K562 (cell line): ENCODE measurements at regions of chr1 and their contacts with region 1.

Region 1: DNA sequence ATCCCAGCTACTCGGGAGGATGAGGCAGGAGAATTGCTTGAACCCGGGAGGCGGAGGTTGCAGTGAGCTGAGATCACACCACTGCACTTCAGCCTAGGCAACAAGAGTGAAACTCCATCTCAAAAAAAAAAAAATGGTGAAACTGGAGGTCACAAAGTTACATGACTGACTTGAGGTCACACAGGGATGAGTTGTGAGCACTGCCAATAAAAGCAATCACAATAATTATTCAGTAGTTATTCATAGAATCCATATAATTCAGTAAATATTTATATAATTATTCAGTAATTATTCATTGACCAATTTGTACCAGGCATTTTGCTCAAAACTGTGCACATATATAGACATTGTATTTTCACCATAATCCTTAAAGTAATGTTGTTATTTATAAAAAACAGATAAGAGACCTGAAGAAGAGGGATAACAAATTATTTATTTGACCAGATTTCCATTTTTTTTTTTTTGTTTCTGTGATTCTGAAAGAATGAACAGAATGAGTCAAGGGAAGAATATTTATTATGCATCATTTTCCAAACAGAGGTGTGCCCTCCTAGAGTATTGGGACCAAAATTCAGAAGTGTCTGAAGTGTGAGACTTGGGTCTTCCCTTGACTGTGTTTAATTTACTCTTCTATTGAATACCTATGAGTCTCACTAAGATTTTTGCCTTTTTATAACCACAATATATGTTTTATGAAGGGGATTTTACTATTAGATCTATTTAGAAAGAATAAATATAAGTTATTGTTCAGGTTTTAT is 43.0 kb downstream of the PRKAB2 start:
- DNase-seq: no peak
- ATAC-seq: no peak
- H3K4me3 ChIP-seq: no peak overlapping the region
- H3K27ac ChIP-seq: no peak overlapping the region
- H3K4me1 ChIP-seq: no peaks in the 10 kb centered on the region; a peak in 1 of 5 replicates
- H3K27me3 ChIP-seq: peaks cover 5 to 7% of the 10 kb centered on the region in 2 experiments; a peak in 4 of 5 replicates
- CTCF ChIP-seq: no peak
- EP300 ChIP-seq: no peak
- POLR2A ChIP-seq: no peak
- RAD21 ChIP-seq: no peak

Region 2: GRCh38 chr1:147109041-147109440 is 20.3 kb before region 1 on chr1:
- CTCF ChIA-PET with region 1: no interaction called
- POLR2A ChIA-PET with region 1: no interaction called
- in situ Hi-C with region 1: no loop called
- intact Hi-C with region 1: loop called (anchors 2 kb)
- DNase-seq: no peak
- ATAC-seq: no peak
- H3K4me3 ChIP-seq: no peak overlapping the region
- H3K27ac ChIP-seq: no peak overlapping the region
- H3K4me1 ChIP-seq: peaks cover 0 to 6% of the 10 kb centered on the region in 2 experiments; a peak in 1 of 5 replicates
- H3K27me3 ChIP-seq: peaks cover 2 to 29% of the 10 kb centered on the region in 2 experiments; a peak in 4 of 5 replicates
- CTCF ChIP-seq: no peak
- EP300 ChIP-seq: no peak
- POLR2A ChIP-seq: no peak
- RAD21 ChIP-seq: no peak

Region 3: GRCh38 chr1:147152772-147153171 is 23.5 kb after region 1 on chr1:
- CTCF ChIA-PET with region 1: no interaction called
- POLR2A ChIA-PET with region 1: interaction called, 3 read pairs
- in situ Hi-C with region 1: no loop called
- intact Hi-C with region 1: loop called (anchors 2 kb)
- DNase-seq: no peak
- ATAC-seq: no peak
- H3K4me3 ChIP-seq: no peak overlapping the region
- H3K27ac ChIP-seq: no peak overlapping the region
- H3K4me1 ChIP-seq: peaks cover 0 to 7% of the 10 kb centered on the region in 2 experiments; a peak in 2 of 5 replicates
- H3K27me3 ChIP-seq: no peaks in the 10 kb centered on the region
- CTCF ChIP-seq: no peak
- EP300 ChIP-seq: no peak
- POLR2A ChIP-seq: no peak
- RAD21 ChIP-seq: no peak

Region 4: DNA sequence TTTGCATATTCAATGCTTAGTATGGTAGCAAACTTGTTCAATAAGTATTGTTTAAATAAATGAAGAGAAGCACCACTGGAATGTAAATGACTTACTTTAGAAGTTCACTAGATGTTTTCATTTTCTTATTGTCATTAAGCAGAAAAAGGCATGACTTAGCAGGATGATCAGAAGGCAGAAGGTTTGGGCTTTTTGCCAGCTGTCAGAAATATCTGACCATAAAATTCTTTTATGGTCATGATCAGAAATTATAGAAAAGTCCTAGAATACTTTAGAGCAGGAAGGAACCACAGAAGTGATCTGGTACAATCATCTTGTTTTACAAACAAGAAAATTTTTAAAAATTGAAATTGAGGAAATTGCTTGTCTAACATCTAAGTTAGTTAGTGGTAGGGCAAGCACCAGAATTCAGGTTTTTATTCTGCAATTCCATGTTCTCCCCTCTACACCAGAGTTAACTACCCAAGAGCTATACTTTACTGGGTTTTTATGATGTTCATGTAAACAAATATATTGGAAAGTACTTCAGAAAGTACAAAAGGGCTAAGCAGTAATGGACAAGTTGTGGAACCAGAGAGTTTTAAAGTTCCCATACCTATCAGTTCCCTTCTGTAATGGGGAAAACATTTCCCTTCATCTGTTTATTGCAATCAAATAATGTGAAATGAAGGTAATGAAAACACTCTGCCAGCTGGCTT is 85.7 kb after region 1 on chr1:
- CTCF ChIA-PET with region 1: no interaction called
- POLR2A ChIA-PET with region 1: no interaction called
- in situ Hi-C with region 1: no loop called
- intact Hi-C with region 1: no loop called
- DNase-seq: no peak
- ATAC-seq: no peak
- H3K4me3 ChIP-seq: no peak overlapping the region
- H3K27ac ChIP-seq: no peak overlapping the region
- H3K4me1 ChIP-seq: 0 out of 5 replicates have a peak, but pooled peaks cover 0 to 3% of the 10 kb centered on the region in 2 experiments
- H3K27me3 ChIP-seq: peaks cover 5 to 16% of the 10 kb centered on the region in 2 experiments
- CTCF ChIP-seq: no peak
- EP300 ChIP-seq: no peak
- POLR2A ChIP-seq: no peak
- RAD21 ChIP-seq: no peak

Region 5: DNA sequence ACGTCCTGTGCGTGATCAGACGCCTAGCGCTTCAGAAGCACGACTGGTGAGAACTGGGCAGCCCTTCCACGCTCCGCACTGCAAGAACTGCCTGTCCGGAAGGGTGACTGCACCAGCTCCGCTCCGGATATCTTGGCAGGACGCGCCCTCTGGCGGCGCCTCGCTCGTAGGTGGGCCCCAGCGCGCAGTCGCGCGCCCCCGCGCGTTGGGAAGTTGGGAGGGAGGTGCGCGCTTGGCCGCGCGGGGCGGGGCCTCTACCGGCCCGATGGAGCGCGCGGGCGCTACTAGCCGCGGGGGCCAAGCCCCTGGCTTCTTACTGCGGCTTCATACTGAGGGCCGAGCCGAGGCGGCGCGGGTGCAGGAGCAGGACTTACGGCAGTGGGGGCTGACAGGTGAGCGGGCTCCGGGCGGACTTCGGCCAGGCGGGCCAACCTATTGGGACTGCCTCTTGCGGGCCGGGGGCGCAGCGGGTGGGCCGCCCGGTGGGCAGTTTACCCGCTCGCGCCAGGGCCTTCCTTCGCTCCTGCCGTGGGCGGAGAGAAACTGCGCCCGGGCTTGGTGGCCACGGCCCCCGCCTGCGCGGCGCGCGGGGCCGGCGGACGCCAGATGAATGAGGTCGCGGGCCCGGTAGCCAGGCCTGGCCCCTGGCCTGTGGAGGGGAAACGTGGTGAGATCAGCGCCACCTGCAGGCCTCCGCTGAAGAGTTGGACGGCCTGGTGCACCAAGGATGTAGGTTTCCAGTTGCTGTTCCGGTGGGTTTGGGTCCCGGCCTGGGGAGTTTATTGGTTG is 113.3 kb after region 1 on chr1 and contains the start of gene CHD1L:
- CTCF ChIA-PET with region 1: no interaction called
- POLR2A ChIA-PET with region 1: no interaction called
- in situ Hi-C with region 1: no loop called
- intact Hi-C with region 1: no loop called
- DNase-seq: peak; percentile 91 to 97 (median 92)
- ATAC-seq: peak; percentile 89
- H3K4me3 ChIP-seq: peak within 1 kb of the TSS; percentile 87
- H3K27ac ChIP-seq: peak within 1 kb of the TSS; percentile 93
- H3K4me1 ChIP-seq: peaks cover 8 to 28% of the 10 kb centered on the region in 2 experiments
- H3K27me3 ChIP-seq: no peaks in the 10 kb centered on the region
- CTCF ChIP-seq: peak; percentile 93 to 99 (median 99)
- EP300 ChIP-seq: peak; percentile 10; the same call in 1 of the 2 replicates
- POLR2A ChIP-seq: peak; percentile 92
- RAD21 ChIP-seq: peak; percentile 95 to 97
- polyA plus RNA-seq, gene CHD1L: 25.0 to 38.9 TPM

Region 6: GRCh38 chr1:147472966-147473734 is 343.9 kb after region 1 on chr1:
- CTCF ChIA-PET with region 1: no interaction called
- POLR2A ChIA-PET with region 1: no interaction called
- in situ Hi-C with region 1: no loop called
- intact Hi-C with region 1: no loop called
- DNase-seq: no peak
- ATAC-seq: no peak
- H3K4me3 ChIP-seq: no peak overlapping the region
- H3K27ac ChIP-seq: no peak overlapping the region
- H3K4me1 ChIP-seq: no peaks in the 10 kb centered on the region
- H3K27me3 ChIP-seq: peaks cover 2 to 27% of the 10 kb centered on the region in 2 experiments; a peak in 3 of 5 replicates
- CTCF ChIP-seq: no peak
- EP300 ChIP-seq: no peak
- POLR2A ChIP-seq: no peak
- RAD21 ChIP-seq: no peak